Activated T-helper 2 cell treated with anti-CD3 and anti-CD28 coated beads, Interferon-gamma antibody, Interleukin-2, Interleukin-4, amounts not matched to agents 10 μg/mL and 5 μg/mL and 100 μg/mL, durations not matched to agents 14 hours and 24 hours and 36 hours (primary cell): ENCODE measurements at regions of chr2 and their contacts with region 1.

Region 1: DNA sequence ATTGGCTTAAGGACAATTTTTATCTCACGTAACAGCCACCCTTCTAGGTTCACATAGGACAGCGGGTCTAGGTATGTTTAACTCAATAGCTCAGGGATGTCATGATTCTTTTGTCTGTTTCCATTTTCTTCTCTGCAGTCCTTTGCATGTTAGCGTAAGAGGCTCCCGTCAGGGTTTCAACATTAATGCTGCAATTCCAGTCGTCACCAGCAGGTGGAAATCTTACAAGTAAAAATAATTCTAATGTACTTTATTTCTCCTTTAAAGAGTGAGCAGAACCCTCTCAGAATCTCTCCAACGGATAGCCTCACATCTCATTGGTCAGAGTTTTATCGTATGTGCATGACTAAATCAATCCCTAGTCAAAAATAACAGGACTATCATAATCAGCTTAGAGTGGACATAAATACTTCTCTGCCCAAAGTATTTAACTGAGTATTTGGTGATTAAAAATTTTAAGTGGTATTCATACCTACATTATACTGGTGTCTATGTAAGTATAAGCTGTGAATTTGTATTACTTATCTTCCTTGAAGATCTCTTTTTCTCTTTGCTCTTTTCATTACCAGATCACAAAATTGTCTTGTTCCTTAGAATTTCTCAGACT is 487.2 kb upstream of the GCFC2 start:
- DNase-seq: no peak
- H3K4me3 Mint-ChIP-seq: no peak overlapping the region
- H3K27ac Mint-ChIP-seq: no peak overlapping the region
- H3K4me1 Mint-ChIP-seq: no peaks in the 10 kb centered on the region
- H3K27me3 Mint-ChIP-seq: no peaks in the 10 kb centered on the region

Region 2: GRCh38 chr2:75870654-75871137 is 327.2 kb before region 1 on chr2:
- intact Hi-C with region 1: no loop called
- DNase-seq: no peak
- H3K4me3 Mint-ChIP-seq: no peak overlapping the region
- H3K27ac Mint-ChIP-seq: no peak overlapping the region
- H3K4me1 Mint-ChIP-seq: no peaks in the 10 kb centered on the region
- H3K27me3 Mint-ChIP-seq: no peaks in the 10 kb centered on the region

Region 3: GRCh38 chr2:76211991-76212985 is 14.3 kb after region 1 on chr2:
- intact Hi-C with region 1: no loop called
- DNase-seq: no peak
- H3K4me3 Mint-ChIP-seq: no peak overlapping the region
- H3K27ac Mint-ChIP-seq: no peak overlapping the region
- H3K4me1 Mint-ChIP-seq: no peaks in the 10 kb centered on the region
- H3K27me3 Mint-ChIP-seq: no peaks in the 10 kb centered on the region

Region 4: DNA sequence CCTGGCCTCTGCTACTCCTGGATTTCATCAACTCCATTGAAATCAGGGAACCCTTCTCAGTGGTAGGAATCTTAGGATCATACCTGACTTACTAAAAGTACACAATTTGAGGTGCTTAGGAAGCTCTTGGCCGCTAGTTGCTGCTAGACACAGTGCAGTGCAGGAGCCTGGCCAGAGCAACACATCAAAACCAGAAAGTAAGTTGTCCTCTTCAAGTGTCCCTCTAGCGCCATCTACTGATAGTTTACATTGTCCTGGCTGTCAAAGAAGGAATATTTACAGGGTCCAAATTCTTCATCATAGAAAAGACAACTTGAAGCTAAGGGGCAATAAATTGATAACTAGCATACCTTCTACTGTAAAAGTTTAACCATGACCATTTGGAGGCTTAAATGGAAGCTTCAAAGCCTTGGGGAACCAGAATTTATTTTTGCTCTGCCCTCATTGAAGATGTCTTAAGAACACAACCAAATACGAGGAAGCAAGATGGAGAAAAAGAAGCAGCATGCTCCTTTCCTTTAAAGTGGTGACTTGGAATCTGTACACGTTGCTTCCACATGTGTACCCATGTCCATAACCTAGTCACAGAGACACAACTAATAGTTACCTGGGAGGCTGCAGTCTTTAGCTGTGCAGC is 401.9 kb after region 1 on chr2:
- intact Hi-C with region 1: loop called (anchors 5 kb)
- DNase-seq: no peak
- H3K4me3 Mint-ChIP-seq: no peak overlapping the region
- H3K27ac Mint-ChIP-seq: no peak overlapping the region
- H3K4me1 Mint-ChIP-seq: no peaks in the 10 kb centered on the region
- H3K27me3 Mint-ChIP-seq: no peaks in the 10 kb centered on the region